Activated T-helper 1 cell treated with anti-CD3 and anti-CD28 coated beads, Interleukin-12 subunit alpha, Interleukin-12 subunit beta, Interleukin-2, Interleukin-4 antibody, amounts not matched to agents 30 ng/mL and 10 ng/mL and 1 ng/mL, durations not matched to agents 14 hours and 24 hours and 36 hours (primary cell): ENCODE measurements at regions of chr14 and their contacts with region 1.

Region 1: GRCh38 chr14:21557084-21557901 is 22.6 kb downstream of the OR10G3 start:
- DNase-seq: peak; percentile 62
- H3K4me3 Mint-ChIP-seq: no peak overlapping the region
- H3K27ac Mint-ChIP-seq: peak overlapping the region; percentile 68
- H3K4me1 Mint-ChIP-seq: peaks cover 8% of the 10 kb centered on the region
- H3K27me3 Mint-ChIP-seq: no peaks in the 10 kb centered on the region

Region 2: GRCh38 chr14:21136024-21136423 is 421.3 kb before region 1 on chr14:
- intact Hi-C with region 1: loop called (anchors 1 kb)
- DNase-seq: no peak
- H3K4me3 Mint-ChIP-seq: no peak overlapping the region
- H3K27ac Mint-ChIP-seq: no peak overlapping the region
- H3K4me1 Mint-ChIP-seq: no peaks in the 10 kb centered on the region
- H3K27me3 Mint-ChIP-seq: peaks cover 5% of the 10 kb centered on the region

Region 3: DNA sequence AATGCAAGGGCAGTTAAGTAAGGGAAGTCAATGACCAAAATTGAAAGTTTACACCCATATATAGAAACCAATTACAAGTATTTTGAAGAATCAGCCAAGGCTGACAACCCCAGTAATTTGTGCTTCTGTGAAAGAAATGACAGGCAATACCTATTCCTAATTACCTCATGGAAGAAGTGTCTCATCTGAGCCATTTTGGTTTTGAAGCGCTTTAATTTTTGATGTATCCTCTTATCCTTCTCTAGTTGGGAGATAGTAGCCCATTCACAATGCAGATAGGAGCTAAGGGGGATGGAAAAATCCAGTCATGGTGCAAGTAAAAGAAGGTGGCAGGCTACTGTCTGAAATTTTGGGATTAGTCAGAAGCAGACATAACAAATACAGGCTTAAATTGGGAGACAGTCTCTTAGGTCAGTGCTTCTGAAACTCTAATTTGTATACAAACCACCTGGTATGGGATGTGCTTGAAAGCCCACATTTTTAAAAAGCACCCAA is 143.1 kb before region 1 on chr14:
- intact Hi-C with region 1: loop called (anchors 1 kb)
- DNase-seq: no peak
- H3K4me3 Mint-ChIP-seq: peak overlapping the region; percentile 19
- H3K27ac Mint-ChIP-seq: peak overlapping the region; percentile 92
- H3K4me1 Mint-ChIP-seq: peaks cover 26% of the 10 kb centered on the region
- H3K27me3 Mint-ChIP-seq: no peaks in the 10 kb centered on the region

Region 4: DNA sequence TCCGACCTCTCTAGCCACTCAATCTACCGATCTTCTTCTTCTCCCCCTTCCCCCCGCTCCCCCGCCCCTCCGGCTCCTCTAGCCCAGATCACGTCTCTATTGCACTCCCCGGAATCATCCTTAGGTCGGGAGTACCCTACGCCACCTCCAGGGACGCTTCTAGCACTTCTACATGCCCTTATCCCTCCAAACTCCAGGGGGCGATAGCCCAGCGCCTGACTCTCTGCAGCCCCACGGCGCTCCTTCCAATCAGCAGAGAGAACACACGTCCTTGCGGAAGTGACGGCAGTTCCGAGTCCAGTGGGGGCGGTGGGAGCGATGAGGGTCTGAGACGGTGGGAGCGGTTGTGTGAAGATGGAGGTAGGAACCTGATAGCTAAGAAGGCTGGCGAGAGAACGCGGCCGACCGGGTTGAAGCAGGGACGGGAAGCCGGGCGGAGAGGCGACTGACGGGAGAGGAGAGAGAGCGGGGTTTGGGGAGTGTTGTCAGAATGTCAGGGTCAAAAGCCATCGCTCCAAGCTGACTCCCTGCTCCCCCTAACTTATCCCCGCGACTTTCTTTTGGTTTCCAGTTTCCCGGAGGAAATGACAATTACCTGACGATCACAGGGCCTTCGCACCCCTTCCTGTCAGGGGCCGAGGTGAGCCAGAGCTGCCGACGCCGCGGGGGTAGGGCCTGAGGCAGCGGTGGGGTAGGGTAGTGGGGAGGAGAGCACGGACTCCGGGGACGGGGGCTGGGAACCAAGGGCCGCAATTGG is 80.2 kb before region 1 on chr14 and contains the starts of genes RAB2B and TOX4:
- intact Hi-C with region 1: loop called (anchors 1 kb)
- DNase-seq: peak; percentile 96
- H3K4me3 Mint-ChIP-seq: peak within 1 kb of the TSS; percentile 100
- H3K27ac Mint-ChIP-seq: peak within 1 kb of the TSS; percentile 99
- H3K4me1 Mint-ChIP-seq: peaks cover 35% of the 10 kb centered on the region
- H3K27me3 Mint-ChIP-seq: peaks cover 2% of the 10 kb centered on the region
- total RNA-seq, gene RAB2B: 30.3 and 32.5 TPM in 2 replicates
- total RNA-seq, gene TOX4: 77.5 and 86.6 TPM in 2 replicates

Region 5: DNA sequence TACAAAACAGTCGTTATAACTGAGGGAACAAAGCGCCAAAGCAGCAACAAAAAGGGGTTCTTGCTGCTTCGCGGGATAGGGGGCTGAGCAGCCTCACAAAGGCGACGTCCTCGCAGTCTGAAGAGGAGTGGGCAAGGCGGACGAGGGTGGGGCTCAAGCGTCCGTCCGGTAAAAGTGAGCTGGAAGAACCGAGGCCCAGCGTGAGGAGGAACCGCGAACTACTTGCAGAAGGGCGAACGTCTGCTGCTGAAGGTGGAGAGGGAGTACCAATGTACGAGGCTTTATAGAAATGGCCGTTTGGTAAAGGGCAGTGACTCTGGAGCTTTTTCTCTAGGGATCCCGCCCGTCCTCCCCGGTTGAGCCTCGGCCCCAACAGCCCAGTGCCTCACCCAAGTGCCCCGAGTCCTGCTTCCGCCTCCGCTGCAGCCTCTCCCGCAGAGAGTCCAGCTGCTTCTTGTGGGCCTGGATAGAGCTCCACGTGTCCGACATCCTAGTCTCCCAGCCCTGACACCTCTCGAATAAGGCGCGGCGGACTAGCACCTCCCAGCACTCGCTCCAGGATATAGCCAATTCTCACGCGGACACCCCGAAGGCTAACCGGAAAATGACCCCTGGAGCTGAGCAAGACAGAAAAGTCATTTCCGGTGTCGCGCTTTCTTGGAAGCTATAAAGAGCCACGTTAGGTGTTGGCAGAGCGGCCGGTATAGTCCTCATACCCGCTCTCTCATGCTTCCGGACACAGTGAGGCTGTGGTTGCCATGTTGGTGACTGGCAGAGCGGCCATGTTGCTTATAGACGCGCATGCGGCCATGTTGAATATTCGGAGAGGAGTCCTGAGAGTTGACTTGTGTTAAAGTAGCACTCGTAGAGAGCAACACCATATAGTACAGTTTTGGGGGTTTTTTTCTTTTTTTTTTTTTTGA is 46.3 kb before region 1 on chr14 and contains the start of gene METTL3:
- intact Hi-C with region 1: loop called (anchors 1 kb)
- DNase-seq: peak; percentile 93
- H3K4me3 Mint-ChIP-seq: peak within 1 kb of the TSS; percentile 99
- H3K27ac Mint-ChIP-seq: peak within 1 kb of the TSS; percentile 93
- H3K4me1 Mint-ChIP-seq: peaks cover 27% of the 10 kb centered on the region
- H3K27me3 Mint-ChIP-seq: peaks cover 12% of the 10 kb centered on the region
- total RNA-seq, gene METTL3: 75.1 and 77.7 TPM in 2 replicates

Region 6: DNA sequence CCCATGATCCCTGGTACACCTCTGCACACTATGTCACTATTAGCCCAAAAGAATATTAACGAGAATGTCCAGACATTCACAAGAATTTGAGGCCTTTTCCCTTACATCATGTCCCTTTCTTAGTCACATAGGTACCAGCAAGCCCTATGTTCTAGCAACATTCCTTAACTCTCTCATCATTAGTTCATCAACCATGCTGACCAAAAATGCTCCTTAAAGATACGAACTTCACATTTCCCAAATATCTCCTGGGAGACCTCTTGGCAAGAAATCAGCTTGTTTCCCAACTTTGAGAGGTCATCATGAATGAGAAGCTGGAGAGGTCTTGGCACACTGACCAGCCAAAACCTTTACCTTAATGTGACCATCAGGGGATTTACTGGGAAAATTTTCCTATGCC is 35.8 kb before region 1 on chr14:
- intact Hi-C with region 1: no loop called
- DNase-seq: no peak
- H3K4me3 Mint-ChIP-seq: no peak overlapping the region
- H3K27ac Mint-ChIP-seq: no peak overlapping the region
- H3K4me1 Mint-ChIP-seq: no peaks in the 10 kb centered on the region
- H3K27me3 Mint-ChIP-seq: peaks cover 20% of the 10 kb centered on the region

Region 7: GRCh38 chr14:22226381-22226780 is 669.1 kb after region 1 on chr14:
- intact Hi-C with region 1: no loop called
- DNase-seq: no peak
- H3K4me3 Mint-ChIP-seq: peak overlapping the region; percentile 73
- H3K27ac Mint-ChIP-seq: peak overlapping the region; percentile 73
- H3K4me1 Mint-ChIP-seq: peaks cover 4% of the 10 kb centered on the region
- H3K27me3 Mint-ChIP-seq: no peaks in the 10 kb centered on the region